Dendritic cell treated with granulocyte-macrophage colony-stimulating factor and Interleukin-4, amounts not matched to agents 40 ng/mL and 50 ng/mL, for 4 days (primary cell): ENCODE measurements at regions of chr1 and their contacts with region 1.

Region 1: DNA sequence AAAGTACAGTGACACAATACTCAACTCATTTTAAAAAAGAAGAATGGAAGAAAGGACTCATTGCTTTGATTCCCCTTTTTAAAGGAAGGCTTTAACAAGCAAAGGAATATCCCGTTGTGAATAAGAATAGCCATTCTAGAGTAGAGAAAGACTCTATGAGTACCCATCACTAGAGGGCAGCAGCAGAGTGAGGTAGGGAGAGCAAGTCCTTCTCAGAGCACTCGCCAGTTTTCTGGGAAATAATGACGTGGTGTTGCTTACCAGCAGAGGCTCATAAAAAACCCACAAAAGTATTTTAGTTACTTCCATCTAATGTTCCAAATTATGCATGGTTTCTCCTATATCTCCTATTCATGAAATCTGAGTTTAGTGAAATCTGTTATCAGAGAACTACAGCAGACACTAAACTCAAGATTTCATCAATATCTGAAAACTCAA is 74.6 kb downstream of the USP24 start:
- H3K4me3 Mint-ChIP-seq: no peak overlapping the region
- H3K27ac Mint-ChIP-seq: no peak overlapping the region
- H3K4me1 Mint-ChIP-seq: no peaks in the 10 kb centered on the region
- H3K27me3 Mint-ChIP-seq: no peaks in the 10 kb centered on the region

Region 2: GRCh38 chr1:54743416-54744226 is 396.9 kb before region 1 on chr1:
- intact Hi-C with region 1: no loop called
- H3K4me3 Mint-ChIP-seq: no peak overlapping the region
- H3K27ac Mint-ChIP-seq: no peak overlapping the region
- H3K4me1 Mint-ChIP-seq: no peaks in the 10 kb centered on the region
- H3K27me3 Mint-ChIP-seq: no peaks in the 10 kb centered on the region

Region 3: DNA sequence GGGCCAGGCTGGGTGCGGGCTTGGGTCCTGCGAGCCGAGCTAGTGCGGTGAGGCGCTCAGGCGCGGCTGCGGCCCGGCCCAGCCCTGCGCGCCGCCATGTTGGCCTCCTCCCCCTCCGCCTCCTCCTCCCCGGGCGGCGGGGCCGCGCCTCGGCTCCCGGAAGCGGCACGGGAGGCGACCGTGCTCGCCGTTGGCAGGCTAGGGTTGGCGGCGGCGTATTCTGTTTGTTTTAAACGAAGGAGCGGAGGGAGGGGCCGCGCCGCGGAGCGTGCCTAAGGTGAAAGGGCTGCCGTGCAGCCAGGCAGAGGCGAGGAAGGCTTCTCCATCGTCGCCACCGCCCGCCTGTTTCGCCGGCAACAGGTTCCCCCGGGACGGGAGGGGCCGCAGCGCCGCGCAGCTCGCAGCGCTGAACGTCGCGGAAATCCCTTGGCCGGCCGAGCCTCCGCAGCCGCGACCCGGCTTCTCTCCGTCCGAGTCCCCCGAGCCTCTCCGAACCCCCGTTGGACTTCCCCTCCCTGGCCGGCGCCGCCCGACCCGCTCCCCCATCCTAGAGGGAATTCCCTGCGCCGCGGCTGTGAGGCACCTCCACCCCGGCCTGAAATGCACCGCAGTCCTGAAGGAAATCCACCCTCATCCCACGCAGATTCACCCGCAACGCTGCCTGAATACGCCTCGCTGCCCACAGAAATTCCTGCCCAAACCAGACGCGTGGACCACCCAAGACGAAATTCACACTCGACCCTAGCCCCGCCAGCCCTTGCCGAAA is 74.9 kb after region 1 on chr1 and contains the start of gene USP24:
- intact Hi-C with region 1: loop called (anchors 5 kb)
- H3K4me3 Mint-ChIP-seq: peak within 1 kb of the TSS; percentile 91
- H3K27ac Mint-ChIP-seq: peak within 1 kb of the TSS; percentile 92
- H3K4me1 Mint-ChIP-seq: peaks cover 69% of the 10 kb centered on the region
- H3K27me3 Mint-ChIP-seq: no peaks in the 10 kb centered on the region

Region 4: DNA sequence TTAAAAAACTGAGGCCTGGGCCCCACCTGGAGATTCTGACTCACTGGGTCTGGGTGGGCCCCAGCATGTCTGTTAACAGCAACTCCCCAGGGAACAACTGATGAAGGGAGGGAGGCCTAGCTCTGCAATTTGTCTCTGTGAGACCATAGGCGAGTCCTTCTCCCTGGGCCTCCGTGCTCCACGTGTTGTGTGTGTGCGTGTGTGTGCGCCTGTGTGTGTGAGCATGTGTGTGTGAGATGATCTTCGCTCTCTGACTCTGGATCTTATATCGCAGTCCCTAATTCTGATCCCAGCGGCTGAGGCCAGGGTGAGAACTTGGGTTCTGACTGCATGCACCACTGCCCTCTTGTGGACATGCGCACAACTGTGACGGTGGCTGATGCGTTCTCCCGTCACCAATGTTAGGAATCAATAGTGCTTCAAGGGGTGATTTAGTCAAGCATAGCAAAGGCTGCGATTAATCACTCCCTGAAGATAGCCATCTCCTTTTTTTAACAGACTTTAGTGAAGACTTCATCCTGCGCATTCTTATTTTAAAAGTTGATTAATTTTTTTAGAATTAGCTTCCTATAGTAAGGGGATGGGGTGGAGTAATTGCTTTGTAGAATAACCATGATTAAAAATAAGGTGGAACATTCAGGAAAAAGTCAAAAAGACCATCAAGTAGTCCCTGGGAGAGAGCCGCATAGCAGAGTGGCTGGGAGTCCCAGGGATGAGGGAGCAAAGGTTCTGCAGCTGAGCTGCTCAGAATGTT is 137.0 kb after region 1 on chr1:
- intact Hi-C with region 1: loop called (anchors 1 kb)
- H3K4me3 Mint-ChIP-seq: no peak overlapping the region
- H3K27ac Mint-ChIP-seq: peak overlapping the region; percentile 68
- H3K4me1 Mint-ChIP-seq: peaks cover 26% of the 10 kb centered on the region
- H3K27me3 Mint-ChIP-seq: peaks cover 15% of the 10 kb centered on the region